ENCODE measurements at regions of chr13 and their contacts with region 1.

Region 1: DNA sequence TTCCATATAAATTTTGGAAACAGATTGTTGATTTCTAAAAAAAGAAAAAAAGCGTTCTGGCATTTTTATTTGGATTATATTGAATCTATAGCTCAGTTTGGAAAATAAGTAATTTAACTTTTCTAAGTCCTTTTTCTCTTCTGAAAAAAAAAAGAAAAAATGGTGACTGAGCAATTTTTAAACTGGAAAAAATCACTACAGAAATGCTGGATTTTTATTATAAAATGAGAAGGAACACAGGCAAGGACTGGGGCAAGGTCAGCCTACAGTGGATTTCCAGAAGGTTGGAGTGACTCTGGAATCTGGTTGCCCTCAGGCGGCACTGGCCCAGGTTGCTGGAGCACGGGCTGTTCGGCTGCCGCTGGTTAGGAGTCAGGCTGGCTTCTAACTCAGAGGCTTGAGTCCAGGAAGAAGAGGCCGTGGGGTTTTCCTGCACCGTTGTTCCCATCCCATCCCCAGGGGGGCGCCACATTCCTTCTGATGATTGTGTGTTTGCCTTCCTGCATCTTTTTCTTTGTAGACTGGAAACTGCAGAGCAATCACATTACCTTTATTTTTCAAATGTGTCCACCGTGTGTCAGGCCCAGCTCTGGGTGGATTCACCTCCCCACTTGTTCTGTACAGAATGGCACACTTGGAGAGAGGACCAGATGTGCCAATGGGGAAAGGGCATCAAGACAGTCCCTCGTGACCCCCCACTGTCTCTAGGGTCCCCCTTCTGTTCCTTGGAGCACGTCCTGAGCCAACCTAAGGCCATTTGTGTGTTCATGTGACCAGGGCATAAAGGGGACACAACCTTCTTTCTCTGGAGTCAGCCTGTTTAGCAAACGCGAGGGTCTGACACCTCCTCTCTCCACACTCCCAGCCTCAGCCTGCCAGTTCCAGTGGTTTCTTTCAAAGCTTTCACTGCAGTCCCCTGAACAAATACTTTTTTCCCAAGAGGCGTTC is 44.5 kb upstream of the GTF3A start:
- DNase-seq: peak; percentile 58
- ATAC-seq: peak; percentile 49
- H3K4me3 ChIP-seq: no peak overlapping the region
- H3K27ac ChIP-seq: no peak overlapping the region
- H3K4me1 ChIP-seq: peaks cover 19 to 39% of the 10 kb centered on the region in 2 experiments; a peak in 3 of 4 replicates
- H3K27me3 ChIP-seq: no peaks in the 10 kb centered on the region
- CTCF ChIP-seq: peak; percentile 63 to 89 (median 85); a peak in 5 of 6 replicates
- POLR2A ChIP-seq: no peak
- RAD21 ChIP-seq: peak; percentile 79

Region 2: DNA sequence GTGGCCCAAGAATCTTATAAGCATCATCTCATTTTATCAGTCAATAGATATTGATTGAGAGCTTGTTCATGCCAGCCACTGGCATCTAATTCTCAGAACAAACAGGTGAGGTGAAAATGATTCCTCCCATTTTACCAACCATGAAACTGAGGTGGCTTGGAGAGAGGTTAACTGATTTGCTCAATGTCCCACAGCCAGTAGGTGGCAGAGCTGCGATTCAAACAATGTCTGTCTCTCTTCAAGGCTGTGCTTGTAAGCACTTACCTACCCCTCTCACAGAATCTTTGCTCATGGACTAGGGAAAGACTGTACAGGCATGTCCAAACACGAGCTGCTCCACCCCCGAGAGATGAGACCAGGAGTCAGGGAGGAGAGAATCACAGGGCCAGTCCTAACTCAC is 390.8 kb after region 1 on chr13:
- CTCF ChIA-PET with region 1: no interaction called
- POLR2A ChIA-PET with region 1: no interaction called
- RAD21 ChIA-PET with region 1: no interaction called
- intact Hi-C with region 1: loop called (anchors 5 kb)
- DNase-seq: peak; percentile 31
- ATAC-seq: peak; percentile 97
- H3K4me3 ChIP-seq: no peak overlapping the region
- H3K27ac ChIP-seq: no peak overlapping the region
- H3K4me1 ChIP-seq: no peaks in the 10 kb centered on the region
- H3K27me3 ChIP-seq: no peaks in the 10 kb centered on the region
- CTCF ChIP-seq: peak; percentile 57 to 72 (median 68); a peak in 5 of 6 replicates
- POLR2A ChIP-seq: no peak
- RAD21 ChIP-seq: peak; percentile 57; the same call in 1 of the 2 replicates

Region 3: GRCh38 chr13:27968316-27969081 is 588.5 kb after region 1 on chr13:
- CTCF ChIA-PET with region 1: no interaction called
- POLR2A ChIA-PET with region 1: interaction called, 3 read pairs
- RAD21 ChIA-PET with region 1: no interaction called
- intact Hi-C with region 1: loop called (anchors 5 kb)
- DNase-seq: no peak
- ATAC-seq: peak; percentile 64
- H3K4me3 ChIP-seq: peak overlapping the region; percentile 81 to 84
- H3K27ac ChIP-seq: peak overlapping the region; percentile 83
- H3K4me1 ChIP-seq: peaks cover 6 to 20% of the 10 kb centered on the region in 2 experiments; a peak in 3 of 4 replicates
- H3K27me3 ChIP-seq: no peaks in the 10 kb centered on the region
- CTCF ChIP-seq: 0 out of 6 replicates have a peak, but pooled peaks of 1 of the 3 experiments have one; percentile 1
- POLR2A ChIP-seq: no peak
- RAD21 ChIP-seq: no peak

Region 4: GRCh38 chr13:27980280-27980998 is 600.5 kb after region 1 on chr13:
- CTCF ChIA-PET with region 1: interaction called, 8 read pairs
- POLR2A ChIA-PET with region 1: no interaction called
- RAD21 ChIA-PET with region 1: no interaction called
- intact Hi-C with region 1: loop called (anchors 1 kb)
- DNase-seq: no peak
- ATAC-seq: no peak
- H3K4me3 ChIP-seq: no peak overlapping the region
- H3K27ac ChIP-seq: no peak overlapping the region
- H3K4me1 ChIP-seq: no peaks in the 10 kb centered on the region
- H3K27me3 ChIP-seq: no peaks in the 10 kb centered on the region
- CTCF ChIP-seq: no peak
- POLR2A ChIP-seq: no peak
- RAD21 ChIP-seq: no peak

Measured in HCT116 (cell line).